ENCODE measurements at regions of chr9 and their contacts with region 1.

Region 1: DNA sequence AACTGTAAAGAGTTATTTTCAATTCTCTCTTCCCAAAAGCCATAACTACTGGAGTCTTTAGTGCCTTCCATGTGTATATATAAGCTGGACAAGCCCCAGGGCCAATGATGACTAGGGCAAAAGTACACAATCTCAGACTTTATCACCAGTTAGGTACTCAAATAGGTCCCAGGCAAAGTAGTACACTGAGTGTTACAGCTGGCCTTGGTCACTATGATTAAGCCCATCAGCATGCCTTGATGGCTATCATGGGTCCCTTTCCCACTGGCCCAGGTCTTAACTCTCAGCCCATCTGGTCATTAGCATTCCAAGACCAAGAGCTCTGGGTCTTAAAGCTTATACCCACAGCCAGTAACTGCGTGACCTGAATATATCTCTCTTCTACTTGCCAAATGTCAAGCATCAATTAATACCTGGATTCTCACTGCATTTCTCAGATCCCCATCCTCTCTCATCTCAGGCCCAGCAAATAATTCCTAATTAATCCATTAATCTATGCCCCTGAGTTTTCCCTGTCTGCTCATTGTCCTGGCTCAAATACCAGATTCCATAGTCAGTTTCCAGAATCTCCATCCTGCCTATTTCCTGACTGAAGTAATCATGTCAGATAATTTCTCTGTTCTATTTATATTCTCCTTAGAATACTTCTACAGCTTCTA is 62.3 kb downstream of the NR6A1 start:
- H3K4me3 Mint-ChIP-seq: no peak overlapping the region
- H3K27ac Mint-ChIP-seq: peak overlapping the region; percentile 20
- H3K4me1 Mint-ChIP-seq: peaks cover 34% of the 10 kb centered on the region
- H3K27me3 Mint-ChIP-seq: no peaks in the 10 kb centered on the region

Region 2: GRCh38 chr9:124441291-124441690 is 267.5 kb before region 1 on chr9:
- intact Hi-C with region 1: no loop called
- H3K4me3 Mint-ChIP-seq: no peak overlapping the region
- H3K27ac Mint-ChIP-seq: no peak overlapping the region
- H3K4me1 Mint-ChIP-seq: no peaks in the 10 kb centered on the region
- H3K27me3 Mint-ChIP-seq: peaks cover 24% of the 10 kb centered on the region

Region 3: GRCh38 chr9:124617471-124618141 is 91.2 kb before region 1 on chr9:
- intact Hi-C with region 1: loop called (anchors 1 kb)
- H3K4me3 Mint-ChIP-seq: no peak overlapping the region
- H3K27ac Mint-ChIP-seq: no peak overlapping the region
- H3K4me1 Mint-ChIP-seq: peaks cover 5% of the 10 kb centered on the region
- H3K27me3 Mint-ChIP-seq: no peaks in the 10 kb centered on the region

Region 4: GRCh38 chr9:124754289-124754688 is 45.5 kb after region 1 on chr9:
- intact Hi-C with region 1: loop called (anchors 2 kb)
- H3K4me3 Mint-ChIP-seq: no peak overlapping the region
- H3K27ac Mint-ChIP-seq: no peak overlapping the region
- H3K4me1 Mint-ChIP-seq: peaks cover 59% of the 10 kb centered on the region
- H3K27me3 Mint-ChIP-seq: no peaks in the 10 kb centered on the region

Region 5: DNA sequence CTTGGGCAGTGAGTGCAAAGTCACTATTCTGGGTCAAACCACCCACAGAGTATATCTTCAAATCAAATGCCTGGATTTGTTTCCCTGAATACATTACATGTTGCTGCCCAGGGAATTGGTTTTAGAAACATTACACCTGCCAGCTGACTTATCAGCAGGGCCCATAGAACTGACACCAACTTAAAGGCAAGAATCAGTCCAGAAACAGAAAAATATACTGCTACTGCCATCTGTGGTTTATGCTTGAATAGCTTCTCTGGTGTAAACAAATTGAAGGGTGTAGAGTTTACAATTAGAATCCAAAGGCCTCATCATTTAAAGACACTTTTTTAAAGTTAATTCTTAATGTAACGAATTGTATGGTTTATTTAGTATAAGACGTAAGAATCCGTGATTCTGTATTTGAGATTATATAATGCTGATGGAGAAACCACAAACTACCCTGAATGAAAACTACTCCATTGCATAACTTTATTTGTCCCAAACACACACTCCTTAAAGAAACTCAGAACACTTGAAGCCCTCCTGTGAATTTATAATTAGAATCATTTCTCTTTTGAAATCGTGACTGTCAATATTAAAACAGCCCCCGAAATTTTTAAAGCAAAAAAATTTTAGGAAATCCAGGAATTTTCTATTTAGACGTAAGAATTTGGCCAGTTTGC is 56.1 kb after region 1 on chr9:
- intact Hi-C with region 1: loop called (anchors 2 kb)
- H3K4me3 Mint-ChIP-seq: no peak overlapping the region
- H3K27ac Mint-ChIP-seq: no peak overlapping the region
- H3K4me1 Mint-ChIP-seq: peaks cover 41% of the 10 kb centered on the region
- H3K27me3 Mint-ChIP-seq: peaks cover 11% of the 10 kb centered on the region